CD4-positive, alpha-beta T cell (primary cell): ENCODE measurements at regions of chr2 and their contacts with region 1.

Region 1: GRCh38 chr2:232327105-232328041 is 51.2 kb upstream of the ALPP start:
- DNase-seq: peak; percentile 75 to 89 (median 84)
- ATAC-seq: peak; percentile 92
- H3K4me3 ChIP-seq: no peak overlapping the region
- H3K4me3 Mint-ChIP-seq: no peak overlapping the region
- H3K27ac ChIP-seq: no peak overlapping the region
- H3K27ac Mint-ChIP-seq: peak overlapping the region; percentile 49
- H3K4me1 ChIP-seq: peaks cover 25% of the 10 kb centered on the region
- H3K4me1 Mint-ChIP-seq: peaks cover 22% of the 10 kb centered on the region
- H3K27me3 ChIP-seq: no peaks in the 10 kb centered on the region
- H3K27me3 Mint-ChIP-seq: no peaks in the 10 kb centered on the region
- CTCF ChIP-seq: peak; percentile 93

Region 2: GRCh38 chr2:231900972-231901371 is 426.4 kb before region 1 on chr2:
- CTCF ChIA-PET with region 1: interaction called, 3 read pairs
- POLR2A ChIA-PET with region 1: no interaction called
- intact Hi-C with region 1: loop called (anchors 1 kb)
- DNase-seq: no peak
- ATAC-seq: no peak
- H3K4me3 ChIP-seq: no peak overlapping the region
- H3K4me3 Mint-ChIP-seq: no peak overlapping the region
- H3K27ac ChIP-seq: no peak overlapping the region
- H3K27ac Mint-ChIP-seq: no peak overlapping the region
- H3K4me1 ChIP-seq: peaks cover 2% of the 10 kb centered on the region
- H3K4me1 Mint-ChIP-seq: no peaks in the 10 kb centered on the region
- H3K27me3 ChIP-seq: no peaks in the 10 kb centered on the region
- H3K27me3 Mint-ChIP-seq: peaks cover 4% of the 10 kb centered on the region
- CTCF ChIP-seq: no peak

Region 3: GRCh38 chr2:231925303-231926179 is 401.8 kb before region 1 on chr2:
- CTCF ChIA-PET with region 1: interaction called, 5 read pairs
- POLR2A ChIA-PET with region 1: no interaction called
- intact Hi-C with region 1: loop called (anchors 1 kb)
- DNase-seq: peak; percentile 43 to 86 (median 62)
- ATAC-seq: peak; percentile 47
- H3K4me3 ChIP-seq: peak overlapping the region; percentile 29
- H3K4me3 Mint-ChIP-seq: no peak overlapping the region
- H3K27ac ChIP-seq: no peak overlapping the region
- H3K27ac Mint-ChIP-seq: no peak overlapping the region
- H3K4me1 ChIP-seq: peaks cover 22% of the 10 kb centered on the region
- H3K4me1 Mint-ChIP-seq: peaks cover 6% of the 10 kb centered on the region
- H3K27me3 ChIP-seq: peaks cover 40 to 58% of the 10 kb centered on the region in 2 experiments
- H3K27me3 Mint-ChIP-seq: peaks cover 55% of the 10 kb centered on the region
- CTCF ChIP-seq: peak; percentile 80

Region 4: DNA sequence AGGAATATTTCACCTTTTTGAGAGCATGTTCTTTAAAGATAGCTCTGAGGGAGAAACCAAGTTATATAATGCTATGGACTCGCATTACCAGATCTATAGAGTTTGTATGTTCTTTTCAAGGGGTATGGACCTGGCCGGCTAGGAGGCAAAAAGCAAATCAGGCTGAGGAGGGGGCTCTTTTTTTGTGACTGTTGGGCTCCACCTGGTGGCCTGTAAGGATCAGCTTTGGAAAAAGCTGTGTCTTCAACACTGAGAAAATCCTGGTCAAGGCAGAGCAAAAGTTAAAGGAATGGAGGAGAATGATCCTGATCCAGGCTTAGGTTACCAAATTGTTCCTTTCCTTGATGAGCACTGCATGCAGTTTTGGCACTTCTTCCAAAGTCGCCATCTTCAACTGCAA is 185.3 kb before region 1 on chr2:
- CTCF ChIA-PET with region 1: no interaction called
- POLR2A ChIA-PET with region 1: no interaction called
- intact Hi-C with region 1: loop called (anchors 5 kb)
- DNase-seq: peak in 5 of 14 experiments; percentile 2 to 45 (median 32)
- ATAC-seq: no peak
- H3K4me3 ChIP-seq: no peak overlapping the region
- H3K4me3 Mint-ChIP-seq: no peak overlapping the region
- H3K27ac ChIP-seq: no peak overlapping the region
- H3K27ac Mint-ChIP-seq: peak overlapping the region; percentile 15
- H3K4me1 ChIP-seq: peaks cover 7% of the 10 kb centered on the region
- H3K4me1 Mint-ChIP-seq: peaks cover 39% of the 10 kb centered on the region
- H3K27me3 ChIP-seq: no peaks in the 10 kb centered on the region
- H3K27me3 Mint-ChIP-seq: no peaks in the 10 kb centered on the region
- CTCF ChIP-seq: peak; percentile 58

Region 5: GRCh38 chr2:232230557-232230956 is 96.8 kb before region 1 on chr2:
- CTCF ChIA-PET with region 1: no interaction called
- POLR2A ChIA-PET with region 1: no interaction called
- intact Hi-C with region 1: loop called in 1 of 2 experiments (anchors 10 kb)
- DNase-seq: no peak
- ATAC-seq: no peak
- H3K4me3 ChIP-seq: no peak overlapping the region
- H3K4me3 Mint-ChIP-seq: no peak overlapping the region
- H3K27ac ChIP-seq: no peak overlapping the region
- H3K27ac Mint-ChIP-seq: no peak overlapping the region
- H3K4me1 ChIP-seq: peaks cover 7% of the 10 kb centered on the region
- H3K4me1 Mint-ChIP-seq: peaks cover 16% of the 10 kb centered on the region
- H3K27me3 ChIP-seq: no peaks in the 10 kb centered on the region
- H3K27me3 Mint-ChIP-seq: no peaks in the 10 kb centered on the region
- CTCF ChIP-seq: no peak

Region 6: GRCh38 chr2:232276084-232276732 is 51.2 kb before region 1 on chr2:
- CTCF ChIA-PET with region 1: no interaction called
- POLR2A ChIA-PET with region 1: no interaction called
- intact Hi-C with region 1: loop called in 1 of 2 experiments (anchors 10 kb)
- DNase-seq: no peak
- ATAC-seq: no peak
- H3K4me3 ChIP-seq: no peak overlapping the region
- H3K4me3 Mint-ChIP-seq: no peak overlapping the region
- H3K27ac ChIP-seq: no peak overlapping the region
- H3K27ac Mint-ChIP-seq: no peak overlapping the region
- H3K4me1 ChIP-seq: no peaks in the 10 kb centered on the region
- H3K4me1 Mint-ChIP-seq: peaks cover under 1% of the 10 kb centered on the region
- H3K27me3 ChIP-seq: no peaks in the 10 kb centered on the region
- H3K27me3 Mint-ChIP-seq: no peaks in the 10 kb centered on the region
- CTCF ChIP-seq: no peak

Region 7: DNA sequence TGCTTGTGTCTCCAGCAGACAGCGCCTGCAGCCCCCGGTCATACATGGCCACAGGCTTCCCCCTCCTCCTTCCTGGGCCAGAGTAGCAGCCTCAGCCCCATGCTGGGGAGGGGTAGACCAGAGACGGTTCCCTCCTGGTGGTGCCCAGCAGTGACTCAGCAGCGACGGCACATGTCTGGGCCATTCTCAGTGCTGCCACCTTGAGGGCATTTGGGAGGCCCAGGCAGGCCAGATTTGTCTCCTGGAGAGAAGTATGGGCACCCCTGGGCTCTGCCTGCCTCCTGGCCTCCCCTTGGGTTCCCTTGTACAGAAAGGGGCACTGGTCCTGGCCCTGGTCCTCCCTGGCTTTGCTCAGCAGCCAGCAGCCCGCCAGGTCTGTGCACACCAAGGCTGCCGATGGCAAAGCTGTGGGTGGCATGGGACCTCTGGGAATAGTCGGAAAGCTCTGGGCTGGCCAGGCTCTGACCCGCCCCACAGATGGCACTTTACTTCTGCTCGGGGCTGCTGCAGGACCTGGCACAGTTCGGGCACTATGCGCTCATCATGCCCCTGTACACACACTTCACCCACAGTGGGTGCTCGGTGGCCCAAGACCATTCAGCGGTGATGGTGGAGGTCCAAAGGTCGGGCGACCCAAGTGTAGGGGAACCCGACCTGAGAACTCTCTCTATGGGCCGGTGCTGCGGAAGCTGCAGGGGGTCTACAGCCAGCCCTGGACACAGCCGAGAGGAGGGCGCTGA is 117.2 kb after region 1 on chr2:
- CTCF ChIA-PET with region 1: no interaction called
- POLR2A ChIA-PET with region 1: no interaction called
- intact Hi-C with region 1: loop called (anchors 5 to 10 kb)
- DNase-seq: peak; percentile 26 to 77 (median 50)
- ATAC-seq: peak; percentile 55
- H3K4me3 ChIP-seq: no peak overlapping the region
- H3K4me3 Mint-ChIP-seq: no peak overlapping the region
- H3K27ac ChIP-seq: no peak overlapping the region
- H3K27ac Mint-ChIP-seq: no peak overlapping the region
- H3K4me1 ChIP-seq: peaks cover 11% of the 10 kb centered on the region
- H3K4me1 Mint-ChIP-seq: no peaks in the 10 kb centered on the region
- H3K27me3 ChIP-seq: no peaks in the 10 kb centered on the region
- H3K27me3 Mint-ChIP-seq: peaks cover 3% of the 10 kb centered on the region
- CTCF ChIP-seq: peak; percentile 57

Region 8: DNA sequence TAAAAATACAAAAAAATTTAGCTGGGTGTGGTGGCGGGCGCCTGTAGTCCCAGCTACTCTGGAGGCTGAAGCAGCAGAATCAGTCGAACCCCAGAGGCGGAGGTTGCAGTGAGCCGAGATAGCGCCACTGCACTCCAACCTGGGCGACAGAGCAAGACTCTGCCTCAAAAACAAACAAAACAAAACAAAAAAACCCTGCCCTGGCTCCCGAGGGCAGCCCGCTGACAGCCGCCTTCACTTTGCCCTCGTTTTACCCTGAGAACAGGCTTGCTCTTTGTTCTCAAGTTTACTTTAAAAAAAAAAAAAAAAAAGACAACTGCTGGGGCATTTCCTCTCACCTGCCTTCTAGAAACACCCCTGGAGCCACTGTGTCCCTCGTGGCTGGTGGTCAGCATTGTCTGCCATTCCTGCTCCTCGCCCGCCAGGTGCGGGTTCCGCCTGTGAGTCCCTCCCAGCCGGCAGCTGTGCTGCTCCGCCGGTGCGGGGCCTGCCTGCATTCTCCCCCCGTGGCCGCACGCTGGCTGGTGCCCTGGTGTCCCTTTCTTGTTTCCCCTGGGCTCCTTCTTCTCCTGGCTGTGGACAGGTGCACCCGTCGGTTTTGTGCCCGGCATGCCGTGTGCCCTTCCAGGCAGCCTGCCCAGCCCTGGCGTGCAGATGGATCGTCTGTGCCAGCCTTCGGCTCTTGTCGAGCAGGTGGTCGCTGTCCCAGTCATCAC is 1133.5 kb after region 1 on chr2:
- CTCF ChIA-PET with region 1: no interaction called
- POLR2A ChIA-PET with region 1: no interaction called
- intact Hi-C with region 1: no loop called
- DNase-seq: no peak
- ATAC-seq: no peak
- H3K4me3 ChIP-seq: no peak overlapping the region
- H3K4me3 Mint-ChIP-seq: no peak overlapping the region
- H3K27ac ChIP-seq: no peak overlapping the region
- H3K27ac Mint-ChIP-seq: no peak overlapping the region
- H3K4me1 ChIP-seq: no peaks in the 10 kb centered on the region
- H3K4me1 Mint-ChIP-seq: no peaks in the 10 kb centered on the region
- H3K27me3 ChIP-seq: no peaks in the 10 kb centered on the region
- H3K27me3 Mint-ChIP-seq: no peaks in the 10 kb centered on the region
- CTCF ChIP-seq: no peak